CD4-positive, alpha-beta memory T cell (primary cell): ENCODE measurements at regions of chr1 and their contacts with region 1.

Region 1: DNA sequence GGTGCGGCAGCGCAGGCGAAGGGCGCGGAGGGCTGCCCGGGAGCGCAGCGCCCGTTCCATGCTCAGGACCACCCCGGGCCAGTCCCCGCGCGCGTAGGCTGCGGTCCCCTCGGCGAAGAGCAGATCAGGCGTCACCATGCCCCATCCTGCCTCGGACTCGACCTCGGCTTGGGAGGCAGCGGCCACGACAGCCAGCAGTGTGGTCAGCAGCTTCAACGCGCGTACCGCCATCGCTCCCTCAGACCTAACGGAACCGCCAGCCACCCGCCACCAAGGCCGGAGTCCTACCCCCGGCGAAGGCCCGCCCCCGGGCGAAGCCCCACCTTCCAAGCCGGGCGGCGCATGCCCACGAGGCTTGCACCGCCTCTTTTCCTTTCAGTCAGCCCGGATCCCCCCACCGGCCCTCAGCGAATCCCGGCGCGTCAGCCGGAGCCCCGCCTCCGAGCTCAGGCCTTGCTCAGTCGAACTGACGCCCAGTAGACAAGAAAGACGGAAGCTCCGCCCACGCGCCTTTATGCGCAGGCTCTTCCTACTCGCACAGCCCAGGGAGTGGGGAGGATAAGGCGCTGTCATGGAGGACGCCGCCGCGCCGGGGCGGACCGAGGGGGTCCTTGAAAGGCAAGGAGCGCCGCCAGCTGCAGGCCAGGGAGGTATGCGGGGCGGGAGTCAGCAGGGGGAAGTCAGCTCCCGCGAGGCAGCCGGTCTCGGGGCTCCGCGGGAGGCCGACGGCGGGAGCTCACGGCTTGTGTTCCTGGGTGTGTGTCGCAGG is at the starts of genes C1orf50 and P3H1:
- DNase-seq: peak; percentile 100
- H3K4me3 ChIP-seq: peak within 1 kb of the TSS; percentile 67 to 98
- H3K4me3 Mint-ChIP-seq: peak within 1 kb of the TSS in 1 of 8 donors; percentile 94
- H3K27ac ChIP-seq: peak within 1 kb of the TSS; percentile 85
- H3K27ac Mint-ChIP-seq: peak within 1 kb of the TSS; percentile 85 to 98 (median 93)
- H3K4me1 ChIP-seq: peaks cover 56% of the 10 kb centered on the region
- H3K4me1 Mint-ChIP-seq: peaks cover 18 to 45% (median 28%) of the 10 kb centered on the region in 4 donors
- H3K27me3 ChIP-seq: no peaks in the 10 kb centered on the region
- H3K27me3 Mint-ChIP-seq: no peaks in the 10 kb centered on the region
- total RNA-seq, gene C1orf50: 20.6 to 20.9 TPM
- total RNA-seq, gene P3H1: 52.5 to 56.6 TPM

Region 2: GRCh38 chr1:42657971-42658879 is 108.7 kb before region 1 on chr1 and contains the start of gene PPIH:
- CTCF ChIA-PET with region 1: interaction called, 8 read pairs
- POLR2A ChIA-PET with region 1: interaction called, 33 read pairs
- intact Hi-C with region 1: loop called (anchors 1 kb)
- DNase-seq: peak; percentile 92 to 96 (median 93)
- H3K4me3 ChIP-seq: peak within 1 kb of the TSS; percentile 81 to 89
- H3K4me3 Mint-ChIP-seq: peak within 1 kb of the TSS; percentile 94 to 100 (median 98)
- H3K27ac ChIP-seq: peak within 1 kb of the TSS; percentile 65
- H3K27ac Mint-ChIP-seq: peak within 1 kb of the TSS; percentile 94 to 98 (median 95)
- H3K4me1 ChIP-seq: peaks cover 26% of the 10 kb centered on the region
- H3K4me1 Mint-ChIP-seq: peaks cover 21 to 47% (median 35%) of the 10 kb centered on the region in 4 donors
- H3K27me3 ChIP-seq: no peaks in the 10 kb centered on the region
- H3K27me3 Mint-ChIP-seq: no peaks in the 10 kb centered on the region
- total RNA-seq, gene PPIH: 40.5 to 42.9 TPM

Region 3: DNA sequence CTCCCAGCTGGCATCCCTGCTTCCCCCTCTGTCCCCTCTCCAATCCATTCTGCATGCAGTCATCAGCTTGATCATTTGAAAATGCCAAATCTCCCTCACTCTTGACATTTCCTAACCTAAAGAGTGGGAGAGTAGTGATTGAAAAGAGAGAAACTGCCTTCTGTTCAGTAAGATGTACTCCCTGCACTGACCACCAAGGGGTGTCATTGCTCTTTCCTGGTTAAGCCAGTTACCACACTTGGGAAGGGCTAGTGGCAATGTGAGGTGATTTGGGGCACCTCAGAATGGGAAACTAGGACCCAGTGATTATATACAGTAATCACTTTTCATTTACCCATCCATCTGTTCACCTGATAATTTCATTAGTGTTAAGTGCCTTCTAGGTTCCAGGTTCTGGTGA is 10.9 kb after region 1 on chr1:
- CTCF ChIA-PET with region 1: interaction called, 21 read pairs
- POLR2A ChIA-PET with region 1: interaction called, 12 read pairs
- intact Hi-C with region 1: no loop called
- DNase-seq: peak in 2 of 5 donors; percentile 19 to 28
- H3K4me3 ChIP-seq: no peak overlapping the region
- H3K4me3 Mint-ChIP-seq: no peak overlapping the region
- H3K27ac ChIP-seq: no peak overlapping the region
- H3K27ac Mint-ChIP-seq: peak overlapping the region in 3 of 7 donors; percentile 7 to 29 (median 24)
- H3K4me1 ChIP-seq: no peaks in the 10 kb centered on the region
- H3K4me1 Mint-ChIP-seq: peaks cover 4 to 14% (median 11%) of the 10 kb centered on the region in 4 donors
- H3K27me3 ChIP-seq: no peaks in the 10 kb centered on the region
- H3K27me3 Mint-ChIP-seq: no peaks in the 10 kb centered on the region

Region 4: GRCh38 chr1:42846257-42847110 is 79.6 kb after region 1 on chr1 and contains the start of gene ZNF691:
- CTCF ChIA-PET with region 1: interaction called, 27 read pairs
- POLR2A ChIA-PET with region 1: interaction called, 58 read pairs
- intact Hi-C with region 1: loop called (anchors 1 kb)
- DNase-seq: peak; percentile 88 to 94 (median 89)
- H3K4me3 ChIP-seq: peak within 1 kb of the TSS; percentile 74 to 84
- H3K4me3 Mint-ChIP-seq: peak within 1 kb of the TSS; percentile 91 to 98 (median 96)
- H3K27ac ChIP-seq: peak within 1 kb of the TSS; percentile 72
- H3K27ac Mint-ChIP-seq: peak within 1 kb of the TSS; percentile 59 to 95 (median 86)
- H3K4me1 ChIP-seq: peaks cover 23% of the 10 kb centered on the region
- H3K4me1 Mint-ChIP-seq: peaks cover 27 to 38% (median 35%) of the 10 kb centered on the region in 4 donors
- H3K27me3 ChIP-seq: no peaks in the 10 kb centered on the region
- H3K27me3 Mint-ChIP-seq: no peaks in the 10 kb centered on the region
- total RNA-seq, gene ZNF691: 17.3 to 18.8 TPM

Region 5: GRCh38 chr1:42958488-42959319 is 191.8 kb after region 1 on chr1 and contains the start of gene SLC2A1:
- CTCF ChIA-PET with region 1: no interaction called
- POLR2A ChIA-PET with region 1: interaction called, 4 read pairs
- intact Hi-C with region 1: loop called (anchors 2 kb)
- DNase-seq: peak; percentile 92 to 97 (median 95)
- H3K4me3 ChIP-seq: peak within 1 kb of the TSS; percentile 66 to 78
- H3K4me3 Mint-ChIP-seq: peak within 1 kb of the TSS; percentile 97 to 99 (median 98)
- H3K27ac ChIP-seq: peak within 1 kb of the TSS; percentile 76
- H3K27ac Mint-ChIP-seq: peak within 1 kb of the TSS; percentile 97 to 99 (median 98)
- H3K4me1 ChIP-seq: peaks cover 59% of the 10 kb centered on the region
- H3K4me1 Mint-ChIP-seq: peaks cover 35 to 79% (median 51%) of the 10 kb centered on the region in 4 donors
- H3K27me3 ChIP-seq: no peaks in the 10 kb centered on the region
- H3K27me3 Mint-ChIP-seq: no peaks in the 10 kb centered on the region
- total RNA-seq, gene SLC2A1: 57.5 to 58.4 TPM

Region 6: GRCh38 chr1:43650310-43651085 is 883.6 kb after region 1 on chr1:
- CTCF ChIA-PET with region 1: no interaction called
- POLR2A ChIA-PET with region 1: interaction called, 12 read pairs
- intact Hi-C with region 1: no loop called
- DNase-seq: peak; percentile 90 to 97 (median 91)
- H3K4me3 ChIP-seq: peak overlapping the region; percentile 88 to 91
- H3K4me3 Mint-ChIP-seq: peak overlapping the region; percentile 95 to 100 (median 98)
- H3K27ac ChIP-seq: peak overlapping the region; percentile 79
- H3K27ac Mint-ChIP-seq: peak overlapping the region; percentile 95 to 100 (median 97)
- H3K4me1 ChIP-seq: peaks cover 35% of the 10 kb centered on the region
- H3K4me1 Mint-ChIP-seq: peaks cover 23 to 50% (median 34%) of the 10 kb centered on the region in 4 donors
- H3K27me3 ChIP-seq: no peaks in the 10 kb centered on the region
- H3K27me3 Mint-ChIP-seq: peaks cover 0 to 2% of the 10 kb centered on the region in 2 donors